Adrenal gland (tissue), 19 donors: ENCODE measurements at regions of chr10 and their contacts with region 1.

Region 1: GRCh38 chr10:92848441-92849233 is at the start of gene EXOC6:
- DNase-seq: peak; percentile 74 to 86 (median 81)
- H3K4me3 ChIP-seq: peak within 1 kb of the TSS; percentile 74 to 94 (median 90)
- H3K27ac ChIP-seq: peak within 1 kb of the TSS in 4 of 5 donors; percentile 75 to 93 (median 86)
- H3K4me1 ChIP-seq: peaks cover 0 to 18% of the 10 kb centered on the region in 2 donors
- H3K27me3 ChIP-seq: no peaks in the 10 kb centered on the region
- CTCF ChIP-seq: no peak
- POLR2A ChIP-seq: no peak
- total RNA-seq, gene EXOC6: 14.2 to 60.1 (median 28.3) TPM

Region 2: GRCh38 chr10:92592761-92593618 is 255.6 kb before region 1 on chr10 and contains the start of gene KIF11:
- intact Hi-C with region 1: loop called in 1 of 2 experiments (anchors 10 kb)
- DNase-seq: peak; percentile 97 to 99 (median 98)
- H3K4me3 ChIP-seq: peak within 1 kb of the TSS; percentile 16 to 72 (median 52)
- H3K27ac ChIP-seq: peak within 1 kb of the TSS; percentile 91 to 97 (median 92)
- H3K4me1 ChIP-seq: peaks cover 0 to 6% of the 10 kb centered on the region in 2 donors
- H3K27me3 ChIP-seq: no peaks in the 10 kb centered on the region
- CTCF ChIP-seq: no peak
- POLR2A ChIP-seq: peak; percentile 80 to 96
- total RNA-seq, gene KIF11: 0.48 to 11.6 (median 1.4) TPM

Region 3: DNA sequence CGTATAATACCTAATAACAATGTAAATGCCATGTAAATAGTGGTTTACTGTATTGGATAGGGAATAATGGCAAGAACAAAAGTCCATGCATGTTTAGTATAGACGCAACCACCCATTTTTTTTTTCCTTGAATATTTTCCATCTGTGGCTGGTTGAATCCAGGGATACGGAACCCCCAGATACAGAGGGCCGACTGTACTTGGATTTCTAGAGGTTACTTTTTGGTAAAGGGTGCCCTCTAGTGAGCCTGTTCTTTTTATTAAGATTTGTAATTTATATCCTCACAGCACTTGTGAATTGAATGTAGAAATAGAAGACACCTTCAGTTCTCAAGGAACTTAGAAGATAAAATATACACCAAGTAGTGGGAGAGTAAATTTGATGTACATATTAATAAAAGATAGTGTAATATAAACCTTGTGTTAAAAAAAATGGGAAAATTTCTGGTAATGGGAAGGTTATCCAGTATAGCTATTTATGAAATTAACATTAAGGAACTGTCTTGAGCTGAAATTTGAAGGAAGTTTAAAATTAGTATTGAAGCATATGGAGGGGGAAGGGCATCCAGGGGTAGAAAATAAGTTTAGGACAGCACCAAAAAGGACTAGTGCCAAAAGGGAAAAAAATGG is 31.7 kb after region 1 on chr10:
- intact Hi-C with region 1: loop called in 1 of 2 experiments (anchors 2 kb)
- DNase-seq: peak in 1 of 7 donors; percentile 32
- H3K4me3 ChIP-seq: no peak overlapping the region
- H3K27ac ChIP-seq: no peak overlapping the region
- H3K4me1 ChIP-seq: peaks cover 0 to 8% of the 10 kb centered on the region in 2 donors
- H3K27me3 ChIP-seq: no peaks in the 10 kb centered on the region
- CTCF ChIP-seq: peak; percentile 22 to 64 (median 56)
- POLR2A ChIP-seq: no peak

Region 4: GRCh38 chr10:92942284-92942683 is 93.6 kb after region 1 on chr10:
- intact Hi-C with region 1: no loop called
- DNase-seq: no peak
- H3K4me3 ChIP-seq: no peak overlapping the region
- H3K27ac ChIP-seq: no peak overlapping the region
- H3K4me1 ChIP-seq: no peaks in the 10 kb centered on the region
- H3K27me3 ChIP-seq: no peaks in the 10 kb centered on the region
- CTCF ChIP-seq: no peak
- POLR2A ChIP-seq: no peak